Ovary (tissue), 10 donors: ENCODE measurements at regions of chr4 and their contacts with region 1.

Region 1: DNA sequence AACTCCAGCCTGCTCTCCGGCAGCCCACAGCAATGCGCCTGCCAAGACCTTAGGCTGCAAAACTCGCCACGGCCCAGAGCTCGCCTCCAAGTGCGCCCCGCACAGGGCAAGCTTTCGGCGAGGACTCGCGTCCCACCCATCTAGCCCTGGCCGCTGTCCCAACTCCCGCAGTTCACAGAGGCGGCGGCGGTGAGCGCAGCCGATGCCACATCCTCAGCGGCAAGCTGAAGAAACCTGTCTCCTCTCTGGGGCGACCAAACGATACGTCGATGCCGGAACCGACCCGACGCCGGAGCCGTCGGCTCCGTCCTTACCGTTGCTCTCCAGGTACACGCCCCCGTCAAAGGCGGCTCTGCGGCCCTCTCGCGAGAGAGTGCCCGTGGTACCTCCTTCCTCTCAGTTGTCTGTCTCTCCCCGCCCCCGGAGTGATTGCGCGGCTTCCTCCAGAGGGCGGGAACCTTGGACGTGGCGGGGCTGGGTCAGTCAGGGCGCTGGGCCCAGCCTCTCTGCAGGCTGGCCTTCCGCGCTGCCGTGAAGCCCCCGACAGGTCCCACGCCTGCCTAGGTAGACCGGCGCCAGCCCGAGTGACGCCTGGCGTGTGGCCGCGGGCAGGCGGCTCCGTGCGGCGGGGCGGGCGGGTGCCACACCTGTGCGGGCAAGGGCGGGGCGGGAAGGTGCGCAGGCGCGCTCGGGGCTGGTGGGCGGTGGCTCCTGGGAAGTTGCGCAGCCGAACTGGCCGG is 380 bp upstream of the RAB33B start:
- DNase-seq: peak; percentile 97 to 99 (median 98)
- H3K4me3 ChIP-seq: peak overlapping the region; percentile 94
- H3K27ac ChIP-seq: peak overlapping the region; percentile 94 to 95
- H3K4me1 ChIP-seq: peaks cover 7% of the 10 kb centered on the region
- H3K27me3 ChIP-seq: no peaks in the 10 kb centered on the region
- CTCF ChIP-seq: no peak
- EP300 ChIP-seq: no peak
- POLR2A ChIP-seq: peak; percentile 75

Region 2: GRCh38 chr4:139177868-139178611 is 275.5 kb before region 1 on chr4:
- intact Hi-C with region 1: loop called in 1 of 4 experiments (anchors 5 kb)
- DNase-seq: peak; percentile 91 to 95 (median 94)
- H3K4me3 ChIP-seq: peak overlapping the region; percentile 82
- H3K27ac ChIP-seq: peak overlapping the region; percentile 99 to 100
- H3K4me1 ChIP-seq: no peaks in the 10 kb centered on the region
- H3K27me3 ChIP-seq: no peaks in the 10 kb centered on the region
- CTCF ChIP-seq: no peak
- EP300 ChIP-seq: peak; percentile 84
- POLR2A ChIP-seq: peak; percentile 75

Region 3: GRCh38 chr4:139530833-139531427 is 77.4 kb after region 1 on chr4:
- intact Hi-C with region 1: no loop called
- DNase-seq: peak in 2 of 5 donors; percentile 49 to 55
- H3K4me3 ChIP-seq: no peak overlapping the region
- H3K27ac ChIP-seq: no peak overlapping the region
- H3K4me1 ChIP-seq: no peaks in the 10 kb centered on the region
- H3K27me3 ChIP-seq: no peaks in the 10 kb centered on the region
- CTCF ChIP-seq: peak in 1 of 3 donors; percentile 14
- EP300 ChIP-seq: no peak
- POLR2A ChIP-seq: no peak